Activated naive CD4-positive, alpha-beta T cell treated with anti-CD3 and anti-CD28 coated beads, Interleukin-2, amount 10 ng/mL, durations not matched to agents 7 days and 5 days (primary cell): ENCODE measurements at regions of chr1 and their contacts with region 1.

Region 1: DNA sequence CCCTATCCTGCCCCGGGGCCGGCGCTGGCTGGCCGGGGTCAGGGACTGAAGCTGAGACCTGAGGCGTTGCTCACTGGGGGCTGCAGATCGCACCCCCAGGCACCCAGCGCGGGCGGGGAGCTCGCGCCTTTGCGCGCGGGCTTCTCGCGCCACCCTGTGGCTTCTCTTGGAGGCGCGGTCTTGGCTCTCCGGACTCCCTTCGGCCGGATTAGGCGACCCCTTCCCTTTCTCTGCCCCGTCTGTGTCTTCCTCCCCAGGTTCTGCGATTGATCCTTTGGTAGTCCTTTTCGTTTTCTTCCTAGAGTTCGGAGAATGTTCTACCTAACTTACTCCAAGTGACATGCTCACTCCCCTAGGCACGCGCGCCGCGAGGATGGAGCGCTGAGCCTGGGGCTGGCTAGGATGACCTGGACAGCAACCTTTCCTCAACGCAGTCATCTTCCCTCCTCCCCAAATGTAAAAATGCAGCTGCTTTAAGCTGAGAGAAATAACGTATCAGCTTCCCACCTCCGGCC is 495 bp upstream of the NTRK1 start:
- DNase-seq: peak; percentile 65
- H3K4me3 Mint-ChIP-seq: peak overlapping the region; percentile 65
- H3K27ac Mint-ChIP-seq: no peak overlapping the region
- H3K4me1 Mint-ChIP-seq: peaks cover 54% of the 10 kb centered on the region
- H3K27me3 Mint-ChIP-seq: peaks cover 90% of the 10 kb centered on the region

Region 2: DNA sequence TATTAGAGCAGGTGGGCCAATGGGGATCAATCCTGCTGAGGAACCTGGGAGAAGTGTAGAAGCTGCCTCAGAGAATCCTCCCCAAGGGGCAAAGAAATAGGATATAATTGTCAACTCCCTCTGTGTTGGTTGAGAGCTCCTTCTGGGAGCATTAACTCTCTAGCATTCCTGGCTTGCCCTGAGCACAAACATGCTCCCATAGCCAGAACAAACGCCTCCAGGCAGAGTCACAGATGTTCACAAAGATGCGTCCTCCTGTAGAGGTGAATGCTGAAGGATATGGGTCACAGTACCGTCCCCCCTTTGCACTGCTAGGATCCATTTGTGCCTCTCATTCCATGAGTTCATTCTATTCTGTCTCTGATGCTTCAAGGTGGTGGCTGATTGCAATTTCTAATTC is 227.8 kb before region 1 on chr1:
- CTCF ChIA-PET with region 1: no interaction called
- DNase-seq: no peak
- H3K4me3 Mint-ChIP-seq: no peak overlapping the region
- H3K27ac Mint-ChIP-seq: no peak overlapping the region
- H3K4me1 Mint-ChIP-seq: no peaks in the 10 kb centered on the region
- H3K27me3 Mint-ChIP-seq: peaks cover 87% of the 10 kb centered on the region

Region 3: GRCh38 chr1:156705918-156706656 is 154.1 kb before region 1 on chr1:
- CTCF ChIA-PET with region 1: interaction called, 10 read pairs
- DNase-seq: peak; percentile 78
- H3K4me3 Mint-ChIP-seq: peak overlapping the region; percentile 77
- H3K27ac Mint-ChIP-seq: no peak overlapping the region
- H3K4me1 Mint-ChIP-seq: peaks cover 24% of the 10 kb centered on the region
- H3K27me3 Mint-ChIP-seq: peaks cover 72% of the 10 kb centered on the region

Region 4: GRCh38 chr1:156797212-156797871 is 62.8 kb before region 1 on chr1:
- CTCF ChIA-PET with region 1: interaction called, 240 read pairs
- DNase-seq: peak; percentile 79
- H3K4me3 Mint-ChIP-seq: no peak overlapping the region
- H3K27ac Mint-ChIP-seq: no peak overlapping the region
- H3K4me1 Mint-ChIP-seq: peaks cover 9% of the 10 kb centered on the region
- H3K27me3 Mint-ChIP-seq: no peaks in the 10 kb centered on the region

Region 5: DNA sequence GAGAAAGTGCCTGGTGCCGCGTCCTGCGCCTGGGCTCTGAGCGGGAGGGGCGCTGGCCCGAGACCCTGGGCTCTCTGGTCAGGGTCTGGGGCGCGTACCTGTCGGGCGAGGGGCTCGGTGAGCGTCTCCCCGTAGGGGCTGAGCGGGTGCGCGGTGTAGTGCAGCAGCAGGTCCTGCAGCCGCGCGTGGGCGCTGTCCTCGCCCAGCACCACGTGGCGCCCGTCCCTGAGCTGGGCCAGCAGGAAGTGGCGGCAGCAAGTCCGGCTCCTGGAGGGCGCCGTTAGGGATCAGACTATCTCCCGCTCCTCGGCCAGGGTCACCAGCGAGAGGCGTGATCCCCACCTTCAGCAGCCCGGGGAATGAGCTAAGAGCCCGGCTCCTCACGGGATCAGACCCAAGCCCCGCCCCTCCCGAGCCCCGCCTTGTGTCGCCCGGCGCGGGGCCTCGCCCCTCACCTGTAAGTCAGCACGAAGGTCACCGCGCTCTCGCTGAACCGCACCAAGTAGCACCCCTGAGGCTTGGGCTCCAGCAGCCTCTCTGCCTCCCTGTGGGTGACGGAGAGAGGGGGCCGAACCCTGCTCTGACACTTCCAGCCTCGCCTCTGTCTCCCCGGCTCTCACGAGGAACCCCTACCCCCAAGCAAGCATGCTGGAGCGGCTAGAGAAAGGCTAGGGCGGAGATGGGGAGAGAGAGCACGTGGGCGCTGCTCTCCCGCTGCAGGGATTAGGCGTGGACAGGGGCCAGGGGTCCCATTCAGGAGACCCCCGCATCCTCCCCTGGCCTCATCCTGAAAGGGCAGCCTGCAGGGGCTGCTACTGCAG is 46.2 kb before region 1 on chr1:
- CTCF ChIA-PET with region 1: interaction called, 58 read pairs
- DNase-seq: peak; percentile 84
- H3K4me3 Mint-ChIP-seq: peak overlapping the region; percentile 93
- H3K27ac Mint-ChIP-seq: peak overlapping the region; percentile 100
- H3K4me1 Mint-ChIP-seq: peaks cover 84% of the 10 kb centered on the region
- H3K27me3 Mint-ChIP-seq: peaks cover 5% of the 10 kb centered on the region

Region 6: GRCh38 chr1:156838981-156839410 is 21.2 kb before region 1 on chr1:
- CTCF ChIA-PET with region 1: interaction called, 191 read pairs
- DNase-seq: peak; percentile 66
- H3K4me3 Mint-ChIP-seq: no peak overlapping the region
- H3K27ac Mint-ChIP-seq: no peak overlapping the region
- H3K4me1 Mint-ChIP-seq: peaks cover 34% of the 10 kb centered on the region
- H3K27me3 Mint-ChIP-seq: peaks cover 82% of the 10 kb centered on the region

Region 7: GRCh38 chr1:156892190-156893047 is 32.2 kb after region 1 on chr1:
- CTCF ChIA-PET with region 1: interaction called, 100 read pairs
- DNase-seq: peak; percentile 92
- H3K4me3 Mint-ChIP-seq: peak overlapping the region; percentile 59
- H3K27ac Mint-ChIP-seq: peak overlapping the region; percentile 66
- H3K4me1 Mint-ChIP-seq: peaks cover 27% of the 10 kb centered on the region
- H3K27me3 Mint-ChIP-seq: peaks cover 94% of the 10 kb centered on the region